Activated CD4-positive, alpha-beta T cell treated with anti-CD3 and anti-CD28 coated beads, Interleukin-2, amount 10 ng/mL, durations not matched to agents 7 days and 5 days (primary cell): ENCODE measurements at regions of chr1 and their contacts with region 1.

Region 1: DNA sequence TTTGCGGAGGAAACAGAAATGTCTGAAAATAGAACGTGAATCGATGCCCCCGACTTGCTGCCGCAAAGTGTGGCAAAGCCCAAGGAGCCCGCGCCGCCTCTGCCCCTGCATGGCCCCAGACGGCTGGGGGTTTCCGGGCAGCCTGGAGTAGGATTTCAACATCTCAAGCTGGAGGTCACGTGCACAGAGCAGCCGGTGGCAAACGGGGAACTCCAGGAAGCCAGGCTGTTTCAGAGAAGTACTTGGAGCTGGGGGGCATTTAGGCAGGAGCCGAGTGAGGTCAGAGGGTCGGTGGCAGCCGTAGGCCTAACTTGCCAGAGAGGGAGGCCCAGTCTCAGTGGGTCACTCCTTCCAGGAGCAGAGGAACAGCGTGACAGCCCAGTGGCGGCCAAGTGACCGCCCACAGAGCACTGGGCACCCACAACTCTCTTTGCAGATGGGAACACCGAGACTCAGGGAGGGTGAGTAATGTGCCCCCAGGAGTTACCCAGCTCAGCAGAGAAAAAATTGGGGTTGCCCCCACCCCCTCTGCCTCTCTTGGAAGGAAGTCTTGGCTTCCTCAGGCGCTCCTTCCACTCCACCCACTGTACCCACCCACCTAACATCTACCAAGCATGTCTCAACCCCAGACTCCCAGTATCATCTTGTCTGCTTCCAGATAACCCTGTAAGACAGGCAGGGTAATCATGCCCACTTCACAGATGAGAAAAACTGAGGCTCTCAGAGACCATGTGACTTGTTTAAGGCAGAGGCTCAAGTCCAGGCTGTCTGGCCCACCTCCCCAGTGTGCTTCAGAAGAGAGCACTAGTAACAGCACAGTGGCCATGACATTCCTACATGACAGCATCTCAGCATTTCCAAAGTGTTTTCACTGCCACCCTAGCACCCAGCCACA is 179.4 kb downstream of the HIVEP3 start:
- DNase-seq: peak; percentile 63
- H3K4me3 Mint-ChIP-seq: peak overlapping the region; percentile 61
- H3K27ac Mint-ChIP-seq: peak overlapping the region; percentile 91
- H3K4me1 Mint-ChIP-seq: peaks cover 65% of the 10 kb centered on the region
- H3K27me3 Mint-ChIP-seq: no peaks in the 10 kb centered on the region

Region 2: GRCh38 chr1:41704196-41704595 is 35.1 kb before region 1 on chr1:
- CTCF ChIA-PET with region 1: no interaction called
- POLR2A ChIA-PET with region 1: no interaction called
- DNase-seq: no peak
- H3K4me3 Mint-ChIP-seq: no peak overlapping the region
- H3K27ac Mint-ChIP-seq: no peak overlapping the region
- H3K4me1 Mint-ChIP-seq: peaks cover 11% of the 10 kb centered on the region
- H3K27me3 Mint-ChIP-seq: peaks cover 3% of the 10 kb centered on the region

Region 3: GRCh38 chr1:41726899-41727748 is 12.2 kb before region 1 on chr1:
- CTCF ChIA-PET with region 1: interaction called, 13 read pairs
- POLR2A ChIA-PET with region 1: no interaction called
- DNase-seq: no peak
- H3K4me3 Mint-ChIP-seq: no peak overlapping the region
- H3K27ac Mint-ChIP-seq: peak overlapping the region; percentile 47
- H3K4me1 Mint-ChIP-seq: peaks cover 45% of the 10 kb centered on the region
- H3K27me3 Mint-ChIP-seq: no peaks in the 10 kb centered on the region